PC-3 (cell line): ENCODE measurements at regions of chr10 and their contacts with region 1.

Region 1: DNA sequence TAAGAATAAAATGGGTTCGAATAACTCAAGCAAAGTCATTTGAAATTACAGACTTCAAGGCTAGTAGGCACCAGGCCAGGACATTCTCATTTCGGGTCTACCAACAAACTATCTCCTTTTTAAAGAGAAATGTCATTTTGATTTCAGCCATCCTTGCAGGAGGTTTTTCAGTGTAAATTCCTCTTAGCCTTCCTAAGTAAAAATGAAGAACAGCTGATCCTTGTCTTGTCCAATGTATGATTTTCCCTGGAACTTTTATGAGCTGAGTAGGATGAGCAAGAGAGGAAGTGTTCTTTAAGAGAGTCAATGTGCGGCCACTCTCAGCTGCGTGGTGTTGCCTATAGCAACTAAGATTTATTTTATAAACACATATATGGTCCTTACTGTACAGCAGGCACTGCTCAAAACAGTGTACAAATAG is 110.1 kb downstream of the PLCE1 start:
- DNase-seq: peak; percentile 65
- ATAC-seq: peak; percentile 93
- H3K4me3 ChIP-seq: no peak overlapping the region
- H3K27ac ChIP-seq: peak overlapping the region; percentile 93
- H3K4me1 ChIP-seq: peaks cover 26% of the 10 kb centered on the region
- H3K27me3 ChIP-seq: no peaks in the 10 kb centered on the region
- CTCF ChIP-seq: no peak

Region 2: DNA sequence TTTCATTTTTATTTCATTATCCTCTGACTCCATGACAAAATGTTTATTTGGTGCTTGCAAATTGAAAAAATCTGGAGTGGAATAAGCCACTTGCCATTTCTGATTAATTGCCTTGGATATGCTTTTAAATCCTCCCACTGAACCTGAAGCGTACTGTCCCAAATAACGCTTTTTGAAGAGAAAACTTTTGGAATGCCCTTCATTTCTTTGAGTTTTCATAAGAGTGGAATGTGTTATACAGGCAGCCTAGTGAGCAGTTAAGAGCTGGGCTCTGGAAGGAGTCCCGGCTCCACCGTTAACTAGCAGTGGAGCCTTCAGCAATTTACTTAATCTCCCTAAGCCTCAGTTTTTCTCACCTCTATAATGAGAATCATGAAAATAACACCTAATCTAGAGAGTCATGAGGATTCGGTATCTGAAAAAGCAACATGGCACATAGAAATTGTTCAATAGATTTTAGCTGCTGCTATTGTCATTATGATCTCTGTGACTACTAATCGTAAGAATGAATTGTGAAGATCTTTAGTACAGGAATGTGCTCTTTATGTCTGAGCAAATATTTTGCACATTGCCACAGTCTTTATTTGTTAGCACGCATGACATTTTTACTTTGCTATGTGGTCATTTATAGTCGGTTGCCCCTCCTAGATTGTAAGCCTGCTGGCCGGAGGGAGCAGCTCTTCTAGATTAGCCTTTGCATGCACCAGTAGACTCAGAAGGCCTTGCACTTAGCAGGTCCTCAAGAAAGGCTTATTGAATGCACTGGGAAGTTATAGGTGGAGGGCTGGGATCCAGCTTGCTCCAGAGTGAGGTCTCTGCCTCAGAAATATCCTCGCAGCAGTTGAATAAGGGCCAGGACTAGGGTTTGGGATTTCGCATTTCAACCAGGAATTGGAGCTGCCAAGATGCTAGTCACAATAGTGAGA is 50.7 kb before region 1 on chr10:
- CTCF ChIA-PET with region 1: no interaction called
- POLR2A ChIA-PET with region 1: no interaction called
- intact Hi-C with region 1: loop called (anchors 1 kb)
- DNase-seq: no peak
- ATAC-seq: no peak
- H3K4me3 ChIP-seq: no peak overlapping the region
- H3K27ac ChIP-seq: no peak overlapping the region
- H3K4me1 ChIP-seq: peaks cover 4% of the 10 kb centered on the region; the same call in 1 of the 2 replicates
- H3K27me3 ChIP-seq: no peaks in the 10 kb centered on the region
- CTCF ChIP-seq: no peak